Naive thymus-derived CD4-positive, alpha-beta T cell (primary cell): ENCODE measurements at regions of chr1 and their contacts with region 1.

Region 1: GRCh38 chr1:101203820-101204540 is 32.8 kb upstream of the S1PR1 start:
- DNase-seq: no peak
- ATAC-seq: no peak
- H3K4me3 ChIP-seq: no peak overlapping the region
- H3K4me3 Mint-ChIP-seq: no peak overlapping the region
- H3K27ac ChIP-seq: no peak overlapping the region
- H3K27ac Mint-ChIP-seq: peak overlapping the region in 1 of 9 donors; percentile 18
- H3K4me1 ChIP-seq: no peaks in the 10 kb centered on the region
- H3K4me1 Mint-ChIP-seq: peaks cover 0 to 24% (median 0%) of the 10 kb centered on the region in 7 donors
- H3K27me3 ChIP-seq: no peaks in the 10 kb centered on the region
- H3K27me3 Mint-ChIP-seq: no peaks in the 10 kb centered on the region

Region 2: DNA sequence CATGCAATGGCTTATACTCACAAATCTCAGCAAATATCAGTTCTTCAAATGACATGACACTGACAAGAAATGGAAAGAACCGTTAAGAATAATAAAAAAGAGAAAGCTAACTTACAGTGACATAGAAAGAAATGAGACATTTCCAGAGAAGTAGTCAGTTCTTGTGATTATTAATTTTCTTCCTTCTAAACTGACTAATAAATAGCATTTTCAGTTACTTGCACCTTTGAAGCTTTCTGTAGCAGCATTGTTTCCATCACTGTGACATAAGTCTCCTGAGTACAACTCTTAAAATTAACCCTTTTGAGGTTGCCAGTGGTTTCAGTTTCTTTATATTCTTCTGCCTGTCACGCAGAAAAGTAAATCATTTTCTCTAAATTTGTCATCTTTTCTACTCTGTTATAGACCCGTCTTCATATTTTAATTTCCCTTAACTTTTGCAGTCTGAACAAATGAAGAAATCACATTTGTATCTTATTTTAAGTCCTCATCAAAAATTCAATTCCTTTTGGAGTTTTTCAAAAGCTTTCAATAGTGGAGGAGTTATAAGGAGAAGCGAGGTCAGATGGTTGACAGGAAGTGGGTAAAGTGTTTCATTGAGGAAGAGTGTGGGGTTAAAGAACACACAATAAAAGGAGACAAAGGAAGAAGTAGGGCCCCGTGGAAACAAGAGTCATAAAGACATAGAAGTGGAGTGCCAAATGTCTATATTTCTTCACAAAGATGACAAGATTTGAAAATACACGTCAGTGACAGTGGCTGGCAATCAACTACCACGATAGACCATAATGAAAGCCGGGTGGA is 25.1 kb before region 1 on chr1:
- CTCF ChIA-PET with region 1: no interaction called
- POLR2A ChIA-PET with region 1: interaction called, 3 read pairs
- intact Hi-C with region 1: loop called in 1 of 2 experiments (anchors 1 kb)
- DNase-seq: peak in 7 of 9 donors; percentile 40 to 61 (median 46)
- ATAC-seq: peak; percentile 78
- H3K4me3 ChIP-seq: peak overlapping the region; percentile 3
- H3K4me3 Mint-ChIP-seq: peak overlapping the region; percentile 63 to 90 (median 80)
- H3K27ac ChIP-seq: peak overlapping the region; percentile 60
- H3K27ac Mint-ChIP-seq: peak overlapping the region; percentile 86 to 98 (median 92)
- H3K4me1 ChIP-seq: peaks cover 12 to 20% of the 10 kb centered on the region in 2 donors
- H3K4me1 Mint-ChIP-seq: peaks cover 24 to 69% (median 51%) of the 10 kb centered on the region in 7 donors
- H3K27me3 ChIP-seq: no peaks in the 10 kb centered on the region
- H3K27me3 Mint-ChIP-seq: no peaks in the 10 kb centered on the region